Uterus (tissue), 4 donors: ENCODE measurements at regions of chr4 and their contacts with region 1.

Region 1: DNA sequence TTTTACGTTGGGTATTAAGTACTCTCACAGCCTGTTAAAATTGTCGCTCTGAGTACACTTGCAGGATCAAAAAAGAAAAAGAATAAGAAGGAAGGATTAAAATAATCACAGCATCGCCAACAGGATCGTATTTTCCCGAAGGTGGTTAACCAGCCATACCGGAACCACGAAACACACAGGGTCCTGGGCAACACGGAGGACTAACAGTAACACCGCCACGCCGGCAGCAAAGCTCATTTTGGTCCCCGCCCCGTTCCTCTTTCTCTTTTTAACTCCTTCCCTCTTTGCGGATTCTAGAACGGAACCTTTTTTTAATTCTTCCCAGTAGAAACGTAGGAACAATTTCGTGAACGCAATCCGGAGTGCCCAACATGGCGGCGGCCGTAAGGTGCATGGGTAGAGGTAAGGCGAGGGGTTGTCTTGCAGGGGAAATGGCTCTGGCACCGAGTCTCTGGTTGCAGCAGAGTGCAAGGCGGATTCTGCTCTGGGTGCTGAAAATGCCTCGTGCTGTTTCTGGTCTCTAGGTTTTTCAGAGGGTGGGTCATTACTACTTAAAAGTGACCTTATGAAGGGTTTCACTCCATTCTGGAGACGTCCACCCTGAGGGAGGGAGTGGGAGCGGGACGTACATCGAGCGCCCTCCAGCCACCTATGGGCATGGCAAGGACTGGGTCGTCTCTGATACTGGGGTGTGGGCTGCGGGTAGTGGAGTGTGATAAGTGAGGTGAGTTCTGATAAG is at the start of gene MRPL1:
- DNase-seq: peak; percentile 88 to 92
- H3K4me3 ChIP-seq: peak within 1 kb of the TSS; percentile 55 to 77
- H3K27ac ChIP-seq: peak within 1 kb of the TSS; percentile 92 to 97
- H3K4me1 ChIP-seq: peaks cover 0 to 4% of the 10 kb centered on the region in 2 donors
- H3K27me3 ChIP-seq: no peaks in the 10 kb centered on the region
- CTCF ChIP-seq: peak in 1 of 4 experiments; percentile 12
- POLR2A ChIP-seq: peak in 1 of 2 donors; percentile 37
- total RNA-seq, gene MRPL1: 15.1 to 75.9 (median 34.8) TPM

Region 2: GRCh38 chr4:77681792-77682191 is 180.9 kb before region 1 on chr4:
- intact Hi-C with region 1: no loop called
- DNase-seq: no peak
- H3K4me3 ChIP-seq: no peak overlapping the region
- H3K27ac ChIP-seq: no peak overlapping the region
- H3K4me1 ChIP-seq: no peaks in the 10 kb centered on the region
- H3K27me3 ChIP-seq: no peaks in the 10 kb centered on the region
- CTCF ChIP-seq: no peak
- POLR2A ChIP-seq: no peak

Region 3: GRCh38 chr4:77819843-77820648 is 42.6 kb before region 1 on chr4:
- intact Hi-C with region 1: loop called (anchors 5 kb)
- DNase-seq: peak; percentile 89
- H3K4me3 ChIP-seq: peak overlapping the region; percentile 82 to 87
- H3K27ac ChIP-seq: peak overlapping the region; percentile 99
- H3K4me1 ChIP-seq: peaks cover 4 to 6% of the 10 kb centered on the region in 2 donors
- H3K27me3 ChIP-seq: no peaks in the 10 kb centered on the region
- CTCF ChIP-seq: no peak
- POLR2A ChIP-seq: peak; percentile 88

Region 4: GRCh38 chr4:77911091-77911490 is 48.4 kb after region 1 on chr4:
- intact Hi-C with region 1: no loop called
- DNase-seq: no peak
- H3K4me3 ChIP-seq: no peak overlapping the region
- H3K27ac ChIP-seq: no peak overlapping the region
- H3K4me1 ChIP-seq: no peaks in the 10 kb centered on the region
- H3K27me3 ChIP-seq: no peaks in the 10 kb centered on the region
- CTCF ChIP-seq: no peak
- POLR2A ChIP-seq: no peak